ENCODE measurements at regions of chr17 and their contacts with region 1.

Region 1: GRCh38 chr17:57597531-57598453 is 147.3 kb downstream of the CCDC182 start:
- DNase-seq: peak; percentile 36 to 48
- H3K4me3 ChIP-seq: no peak overlapping the region
- H3K27ac ChIP-seq: no peak overlapping the region
- H3K4me1 ChIP-seq: no peaks in the 10 kb centered on the region
- H3K27me3 ChIP-seq: 0 out of 2 replicates have a peak, but pooled peaks cover 3% of the 10 kb centered on the region
- CTCF ChIP-seq: peak; percentile 87

Region 2: GRCh38 chr17:57328093-57328882 is 269.5 kb before region 1 on chr17:
- CTCF ChIA-PET with region 1: no interaction called
- POLR2A ChIA-PET with region 1: no interaction called
- intact Hi-C with region 1: no loop called
- DNase-seq: no peak
- H3K4me3 ChIP-seq: no peak overlapping the region
- H3K27ac ChIP-seq: no peak overlapping the region
- H3K4me1 ChIP-seq: no peaks in the 10 kb centered on the region
- H3K27me3 ChIP-seq: peaks cover 22% of the 10 kb centered on the region; the same call in 1 of the 2 replicates
- CTCF ChIP-seq: no peak

Region 3: DNA sequence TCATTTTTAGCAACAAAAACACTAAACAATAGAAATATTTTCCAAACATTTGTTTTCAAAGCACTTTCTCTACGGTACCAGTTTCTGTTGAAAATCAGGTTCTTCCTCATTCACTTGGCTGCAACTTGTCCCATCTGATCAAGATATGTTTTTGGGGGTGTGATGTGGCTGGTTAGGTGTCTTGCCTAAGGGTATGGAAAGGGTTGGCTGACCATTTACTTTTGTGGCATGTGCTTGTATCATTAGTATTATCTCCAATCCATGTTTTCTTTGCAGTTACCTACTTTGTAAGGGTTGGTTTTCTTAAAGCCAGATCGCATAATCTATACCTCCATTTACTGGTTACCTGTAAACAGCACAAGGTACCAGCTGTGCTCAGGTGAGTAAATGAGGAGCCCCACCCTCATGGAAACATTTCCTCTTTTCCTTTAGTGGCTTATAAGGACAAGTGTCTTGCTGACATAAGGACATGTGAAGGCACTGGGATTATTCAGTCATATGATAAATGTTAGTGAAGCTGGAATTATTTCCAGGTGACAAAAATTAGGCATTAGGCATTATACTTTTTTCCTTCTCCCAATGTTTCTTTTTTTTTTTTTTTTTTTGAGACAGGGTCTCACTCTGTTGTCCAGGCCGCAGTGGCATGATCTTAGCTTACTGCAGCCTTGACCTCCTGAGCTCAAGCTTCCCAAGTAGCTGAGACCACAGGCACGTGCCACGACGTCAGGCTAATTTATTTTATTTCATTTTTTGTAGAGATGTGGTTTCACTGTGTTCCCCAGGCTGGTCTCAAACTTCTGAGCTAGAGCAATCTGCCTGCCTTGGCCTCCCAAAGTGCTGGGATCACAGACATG is 14.7 kb before region 1 on chr17:
- CTCF ChIA-PET with region 1: interaction called, 14 read pairs
- POLR2A ChIA-PET with region 1: no interaction called
- intact Hi-C with region 1: no loop called
- DNase-seq: peak in 1 of 2 experiments; percentile 62
- H3K4me3 ChIP-seq: no peak overlapping the region
- H3K27ac ChIP-seq: no peak overlapping the region
- H3K4me1 ChIP-seq: no peaks in the 10 kb centered on the region
- H3K27me3 ChIP-seq: no peaks in the 10 kb centered on the region
- CTCF ChIP-seq: no peak

Region 4: GRCh38 chr17:57636985-57637665 is 39.3 kb after region 1 on chr17:
- CTCF ChIA-PET with region 1: no interaction called
- POLR2A ChIA-PET with region 1: no interaction called
- intact Hi-C with region 1: no loop called
- DNase-seq: no peak
- H3K4me3 ChIP-seq: no peak overlapping the region
- H3K27ac ChIP-seq: no peak overlapping the region
- H3K4me1 ChIP-seq: no peaks in the 10 kb centered on the region
- H3K27me3 ChIP-seq: peaks cover 40% of the 10 kb centered on the region
- CTCF ChIP-seq: no peak

Region 5: GRCh38 chr17:57671667-57672632 is 74.2 kb after region 1 on chr17:
- CTCF ChIA-PET with region 1: interaction called, 7 read pairs
- POLR2A ChIA-PET with region 1: no interaction called
- intact Hi-C with region 1: loop called (anchors 1 kb)
- DNase-seq: peak in 1 of 2 experiments; percentile 44
- H3K4me3 ChIP-seq: no peak overlapping the region
- H3K27ac ChIP-seq: no peak overlapping the region
- H3K4me1 ChIP-seq: no peaks in the 10 kb centered on the region
- H3K27me3 ChIP-seq: peaks cover 3% of the 10 kb centered on the region; the same call in 1 of the 2 replicates
- CTCF ChIP-seq: peak; percentile 91

Region 6: GRCh38 chr17:57732062-57732461 is 134.3 kb after region 1 on chr17:
- CTCF ChIA-PET with region 1: interaction called, 13 read pairs
- POLR2A ChIA-PET with region 1: no interaction called
- intact Hi-C with region 1: no loop called
- DNase-seq: no peak
- H3K4me3 ChIP-seq: no peak overlapping the region
- H3K27ac ChIP-seq: no peak overlapping the region
- H3K4me1 ChIP-seq: no peaks in the 10 kb centered on the region
- H3K27me3 ChIP-seq: peaks cover 83% of the 10 kb centered on the region
- CTCF ChIP-seq: no peak

Region 7: GRCh38 chr17:57747221-57748017 is 149.6 kb after region 1 on chr17:
- CTCF ChIA-PET with region 1: interaction called, 3 read pairs
- POLR2A ChIA-PET with region 1: interaction called, 8 read pairs
- intact Hi-C with region 1: loop called (anchors 1 kb)
- DNase-seq: peak; percentile 15 to 54
- H3K4me3 ChIP-seq: no peak overlapping the region
- H3K27ac ChIP-seq: no peak overlapping the region
- H3K4me1 ChIP-seq: no peaks in the 10 kb centered on the region
- H3K27me3 ChIP-seq: peaks cover 82% of the 10 kb centered on the region
- CTCF ChIP-seq: peak; percentile 88

Region 8: DNA sequence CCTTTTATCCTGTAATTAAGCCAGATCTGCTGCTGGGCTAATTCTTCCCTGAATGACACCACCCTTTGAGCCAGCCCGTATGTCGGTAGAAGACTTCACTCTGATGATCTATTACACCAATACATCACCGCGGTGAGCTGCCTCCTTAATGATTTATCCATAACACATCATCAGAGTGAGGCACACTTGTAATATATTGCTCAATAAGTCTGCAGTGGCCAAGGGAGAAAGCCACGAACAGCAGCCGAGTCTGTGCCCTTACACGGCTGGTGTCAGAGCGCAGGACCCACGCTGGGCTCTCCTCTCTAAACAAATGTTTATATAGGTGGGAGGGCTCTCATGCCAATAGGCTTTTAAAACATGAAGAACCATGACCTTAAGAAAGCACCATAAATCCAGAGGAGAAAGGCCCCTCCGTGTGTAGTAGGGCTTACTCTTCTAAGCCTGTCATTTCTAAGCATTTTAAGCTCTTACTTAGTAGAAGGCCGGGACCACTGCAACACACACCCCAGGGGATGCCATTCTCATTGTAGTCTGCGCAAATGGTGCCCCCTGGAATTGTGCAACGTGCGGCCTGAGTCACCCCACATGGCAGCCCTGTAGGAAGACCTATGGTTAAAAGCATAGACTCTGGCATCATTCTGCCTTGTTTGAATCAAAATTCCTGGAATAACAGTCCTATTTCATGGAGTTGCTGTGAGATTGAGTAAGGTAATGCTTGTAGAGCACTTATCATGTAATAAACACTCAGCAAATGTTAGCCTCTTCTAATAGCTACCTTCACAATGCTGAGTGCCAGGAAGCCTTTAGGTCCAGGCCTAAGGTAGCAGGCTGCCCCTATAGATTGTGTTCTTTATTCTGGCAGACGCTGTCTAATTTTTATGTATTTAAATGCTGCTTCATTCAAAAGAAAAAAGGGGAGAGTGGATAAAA is 225.9 kb after region 1 on chr17:
- CTCF ChIA-PET with region 1: no interaction called
- POLR2A ChIA-PET with region 1: no interaction called
- intact Hi-C with region 1: loop called (anchors 10 kb)
- DNase-seq: no peak
- H3K4me3 ChIP-seq: no peak overlapping the region
- H3K27ac ChIP-seq: no peak overlapping the region
- H3K4me1 ChIP-seq: no peaks in the 10 kb centered on the region
- H3K27me3 ChIP-seq: peaks cover 14% of the 10 kb centered on the region
- CTCF ChIP-seq: no peak